BJ (cell line): ENCODE measurements at regions of chr17 and their contacts with region 1.

Region 1: DNA sequence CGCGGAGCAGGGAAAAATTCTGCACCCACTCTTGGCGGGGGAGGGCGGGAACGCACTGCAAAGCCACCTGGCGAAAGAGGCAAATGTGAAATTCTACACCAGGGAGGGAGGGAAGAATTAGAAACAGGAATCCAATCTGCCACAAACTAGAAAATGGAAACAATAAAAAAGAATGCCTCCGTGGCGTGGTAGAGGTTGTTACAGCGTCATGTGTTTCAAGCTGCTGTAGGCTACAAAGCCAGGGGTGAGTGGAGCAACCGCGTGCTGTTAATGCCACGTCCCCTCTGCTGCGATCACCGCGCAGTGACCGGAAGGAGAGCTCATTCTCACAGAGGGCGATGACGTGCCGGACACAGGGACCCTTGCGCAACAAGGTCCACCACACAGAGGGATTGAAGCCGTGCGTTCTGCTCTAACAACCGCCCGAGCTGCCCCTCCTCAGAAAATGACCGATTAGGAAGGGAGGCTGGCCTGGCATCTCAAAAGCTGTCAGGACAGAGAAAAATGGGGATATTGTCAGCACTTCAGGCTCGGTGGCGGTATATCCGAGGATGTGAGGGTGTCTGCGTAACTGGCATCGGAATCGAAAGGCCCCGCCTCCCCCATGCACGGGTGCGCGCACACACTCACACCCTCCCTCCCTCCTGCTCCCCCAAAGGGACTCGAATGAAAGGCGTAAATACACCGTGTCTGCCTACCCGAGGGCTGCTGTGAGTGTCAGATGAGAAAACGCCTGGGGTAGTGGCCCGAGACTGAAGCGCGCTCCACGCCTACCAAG is 70.8 kb upstream of the TNRC6C start:
- DNase-seq: peak; percentile 26
- H3K4me3 ChIP-seq: peak overlapping the region; percentile 55
- H3K27me3 ChIP-seq: peaks cover 14% of the 10 kb centered on the region
- CTCF ChIP-seq: no peak

Region 2: DNA sequence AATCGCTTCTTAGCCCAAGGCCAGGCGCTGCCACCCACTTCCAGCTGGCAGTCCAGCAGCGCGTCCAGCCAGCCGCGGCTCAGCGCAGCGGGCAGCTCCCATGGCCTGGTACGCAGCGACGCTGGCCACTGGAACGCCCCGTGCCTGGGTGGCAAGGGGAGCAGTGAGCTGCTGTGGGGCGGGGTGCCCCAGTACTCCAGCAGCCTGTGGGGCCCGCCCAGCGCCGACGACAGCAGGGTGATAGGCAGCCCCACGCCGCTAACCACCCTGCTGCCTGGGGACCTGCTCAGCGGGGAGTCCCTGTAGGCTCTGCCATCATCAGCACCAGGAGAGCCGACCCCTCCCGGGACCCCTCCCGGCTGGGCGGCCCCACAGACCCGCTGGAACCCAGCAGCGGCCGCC is 216.9 kb after region 1 on chr17:
- CTCF ChIA-PET with region 1: no interaction called
- POLR2A ChIA-PET with region 1: interaction called, 12 read pairs
- DNase-seq: no peak
- H3K4me3 ChIP-seq: no peak overlapping the region
- H3K27me3 ChIP-seq: no peaks in the 10 kb centered on the region
- CTCF ChIP-seq: no peak